Activated naive CD4-positive, alpha-beta T cell treated with anti-CD3 and anti-CD28 coated beads, Interleukin-2, amount 10 ng/mL, durations not matched to agents 7 days and 5 days (primary cell): ENCODE measurements at regions of chr20 and their contacts with region 1.

Region 1: DNA sequence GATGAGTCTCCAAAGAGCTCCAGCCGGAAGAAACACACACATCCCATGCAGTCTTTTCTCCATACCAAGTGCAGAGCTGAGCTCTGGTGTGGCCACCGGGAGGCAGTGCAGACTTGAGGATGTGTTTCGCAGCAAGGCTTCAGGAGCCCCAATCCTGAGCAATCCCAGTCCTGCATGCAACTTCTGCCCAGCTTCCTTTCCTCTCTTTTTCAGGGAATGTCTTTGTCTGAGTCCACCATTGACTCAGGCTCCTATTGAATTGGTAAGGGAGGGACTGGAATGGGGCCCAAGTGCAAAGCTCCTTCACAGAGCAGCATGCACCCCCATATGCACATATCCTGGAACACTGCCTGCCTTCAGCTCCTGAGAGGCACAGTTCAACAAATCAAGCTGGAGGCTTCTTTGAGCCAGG is 50.5 kb upstream of the ASIP start:
- DNase-seq: peak; percentile 68
- H3K4me3 Mint-ChIP-seq: no peak overlapping the region
- H3K27ac Mint-ChIP-seq: no peak overlapping the region
- H3K4me1 Mint-ChIP-seq: peaks cover 11% of the 10 kb centered on the region
- H3K27me3 Mint-ChIP-seq: peaks cover 52% of the 10 kb centered on the region

Region 2: GRCh38 chr20:34302723-34303528 is 112.2 kb after region 1 on chr20 and contains the start of gene AHCY:
- CTCF ChIA-PET with region 1: interaction called, 11 read pairs
- DNase-seq: peak; percentile 97
- H3K4me3 Mint-ChIP-seq: peak within 1 kb of the TSS; percentile 88
- H3K27ac Mint-ChIP-seq: peak within 1 kb of the TSS; percentile 92
- H3K4me1 Mint-ChIP-seq: peaks cover 25% of the 10 kb centered on the region
- H3K27me3 Mint-ChIP-seq: peaks cover 8% of the 10 kb centered on the region